ENCODE measurements at regions of chr19 and their contacts with region 1.

Region 1: DNA sequence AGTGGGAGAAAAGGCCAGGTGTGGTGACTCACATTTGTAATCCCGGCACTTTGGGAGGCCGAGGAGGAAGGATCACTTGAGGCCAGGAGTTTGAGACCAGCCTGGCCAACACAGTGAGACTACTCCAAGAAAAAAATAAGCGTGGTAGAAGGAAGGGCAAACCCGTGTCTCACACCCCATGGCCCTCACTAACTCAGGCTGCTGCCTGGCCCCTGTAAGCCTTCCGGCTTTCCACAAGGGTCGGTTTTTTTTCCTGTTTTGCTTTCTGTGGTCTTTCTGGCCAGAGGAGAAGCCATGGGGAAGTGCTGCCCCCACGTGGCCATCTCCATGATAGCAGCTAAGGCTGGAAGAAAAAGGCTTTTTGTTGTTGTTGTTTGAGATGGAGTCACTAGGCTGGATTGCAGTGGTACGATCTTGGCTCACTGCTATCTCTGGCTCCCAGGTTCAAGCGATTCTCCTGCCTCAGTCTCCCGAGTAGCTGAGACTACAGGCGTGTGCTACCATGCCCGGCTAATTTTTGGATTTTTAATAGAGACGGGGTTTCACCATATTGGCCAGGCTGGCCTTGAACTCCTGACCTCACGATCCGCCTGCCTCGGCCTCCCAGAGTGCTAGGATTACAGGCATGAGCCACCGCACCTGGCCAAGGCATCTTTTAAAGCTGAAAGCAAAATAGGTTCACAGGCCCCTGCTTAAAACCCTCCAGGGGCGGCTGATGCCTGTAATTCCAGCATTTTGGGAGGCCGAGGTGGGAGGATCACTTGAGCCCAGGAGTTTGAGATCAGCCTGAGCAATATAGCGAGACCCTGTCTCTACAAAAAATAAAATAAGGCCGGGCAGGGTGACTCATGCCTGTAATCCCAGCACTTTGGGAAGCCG is 7.5 kb upstream of the ARHGEF18 start:
- DNase-seq: peak; percentile 90
- H3K4me3 ChIP-seq: no peak overlapping the region
- H3K27ac ChIP-seq: peak overlapping the region in 2 of 4 donors; percentile 23 to 45
- H3K4me1 ChIP-seq: peaks cover 6 to 34% (median 14%) of the 10 kb centered on the region in 4 donors
- H3K27me3 ChIP-seq: no peaks in the 10 kb centered on the region
- CTCF ChIP-seq: peak; percentile 93 to 97 (median 96)
- EP300 ChIP-seq: no peak
- POLR2A ChIP-seq: no peak

Region 2: DNA sequence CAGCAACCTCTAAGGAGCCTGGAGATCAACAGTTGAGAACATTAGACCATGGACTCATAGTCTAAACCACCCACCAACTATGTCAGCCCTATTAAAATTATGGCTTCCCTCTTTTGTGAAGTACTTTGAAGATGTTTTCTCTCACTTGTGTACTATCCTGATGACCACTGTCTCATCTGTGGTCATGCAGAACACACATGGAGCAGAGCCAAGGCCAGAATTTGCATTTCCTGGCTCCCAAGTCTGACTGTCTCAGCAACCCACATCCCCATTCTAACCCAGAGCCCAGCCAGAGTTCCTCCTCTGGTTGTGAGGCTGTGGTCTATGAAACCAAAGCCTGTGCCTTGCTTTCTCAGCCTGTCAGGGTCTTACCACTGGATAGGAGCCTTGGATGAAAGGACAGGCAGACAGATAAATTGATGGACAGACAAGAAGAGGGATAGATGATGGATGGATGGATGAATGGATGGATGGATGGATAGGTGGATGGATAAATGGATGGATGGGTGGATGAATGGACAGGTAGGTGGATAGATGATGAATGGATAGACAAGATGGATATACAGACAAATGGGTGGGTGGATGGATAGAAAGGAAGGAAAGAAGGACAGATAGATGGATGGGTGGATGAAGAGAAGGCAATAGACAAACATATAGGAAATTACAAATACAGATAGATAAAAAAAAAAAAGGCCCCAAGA is 236.3 kb before region 1 on chr19:
- in situ Hi-C with region 1: loop called (anchors 5 to 25 kb)
- intact Hi-C with region 1: loop called (anchors 2 kb)
- DNase-seq: no peak
- H3K4me3 ChIP-seq: no peak overlapping the region
- H3K27ac ChIP-seq: no peak overlapping the region
- H3K4me1 ChIP-seq: peaks cover 0 to 14% (median under 1%) of the 10 kb centered on the region in 4 donors
- H3K27me3 ChIP-seq: peaks cover 5% of the 10 kb centered on the region
- CTCF ChIP-seq: no peak
- EP300 ChIP-seq: no peak
- POLR2A ChIP-seq: no peak

Region 3: DNA sequence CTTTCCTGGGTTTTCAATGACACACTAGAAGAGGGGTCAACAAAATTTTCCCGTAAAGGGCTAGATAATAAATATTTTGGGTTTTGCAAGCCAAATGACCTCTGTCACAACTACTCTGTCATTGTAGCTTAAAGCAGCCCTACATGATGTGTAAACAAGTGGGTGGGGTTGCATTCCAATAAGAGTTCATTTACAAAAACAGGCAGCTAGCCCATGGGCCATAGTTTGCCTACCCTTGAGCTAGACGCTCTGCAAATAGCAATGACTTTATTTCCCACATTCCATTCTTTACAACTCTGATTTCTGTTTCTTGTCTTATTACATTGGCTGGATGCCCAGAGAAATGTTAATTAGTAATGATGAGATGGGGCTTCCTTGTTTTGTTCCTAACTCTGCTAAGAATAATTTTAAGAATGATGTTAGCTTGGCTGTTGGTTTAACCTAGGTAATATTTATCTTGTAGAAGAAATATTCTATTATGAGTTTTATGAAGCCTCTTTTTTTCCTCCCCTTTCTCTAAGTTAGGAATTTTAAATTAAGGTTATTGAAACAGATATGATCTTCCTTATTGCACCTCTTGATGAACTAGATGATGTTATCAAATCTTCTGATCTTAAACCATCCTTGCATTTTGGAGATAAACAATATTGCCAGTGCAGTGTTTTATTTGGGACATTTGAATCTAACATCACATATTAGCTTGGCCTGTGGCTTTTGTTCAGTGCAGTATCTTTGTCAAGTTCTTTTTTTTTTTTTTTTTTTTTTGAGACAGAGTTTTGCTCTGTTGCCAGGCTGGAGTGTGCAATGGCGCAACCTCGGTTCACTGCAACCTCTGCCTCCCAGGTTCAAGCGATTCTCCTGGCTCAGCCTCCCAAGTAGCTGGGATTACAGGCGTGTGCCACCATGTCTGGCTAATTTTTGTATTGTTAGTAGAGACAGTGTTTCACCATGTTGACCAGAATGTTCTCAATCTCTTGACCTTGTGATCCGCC is 195.4 kb before region 1 on chr19:
- in situ Hi-C with region 1: no loop called
- intact Hi-C with region 1: loop called (anchors 5 kb)
- DNase-seq: peak; percentile 41
- H3K4me3 ChIP-seq: no peak overlapping the region
- H3K27ac ChIP-seq: peak overlapping the region in 3 of 4 donors; percentile 26 to 49 (median 36)
- H3K4me1 ChIP-seq: peaks cover 0 to 6% (median 0%) of the 10 kb centered on the region in 4 donors
- H3K27me3 ChIP-seq: no peaks in the 10 kb centered on the region
- CTCF ChIP-seq: no peak
- EP300 ChIP-seq: no peak
- POLR2A ChIP-seq: no peak

Region 4: DNA sequence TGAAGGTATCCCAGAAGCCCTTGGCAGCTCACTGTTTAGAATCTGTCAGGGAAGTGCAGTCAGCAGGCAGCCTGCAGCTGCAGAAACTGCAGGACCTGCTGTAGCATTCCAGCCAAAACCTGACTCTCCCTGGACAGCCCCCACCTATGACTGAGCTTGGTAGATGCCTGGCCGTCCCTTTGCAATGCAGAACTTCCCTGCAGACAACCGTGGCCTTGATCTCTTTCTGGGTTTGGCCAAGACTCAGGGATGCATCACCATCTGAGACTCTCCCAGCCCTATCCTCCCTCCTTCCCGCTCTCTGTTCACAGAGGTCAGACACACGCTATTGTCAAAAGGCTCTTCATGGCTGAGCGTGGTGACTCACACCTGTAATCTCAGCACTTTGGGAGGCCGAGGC is 172.3 kb before region 1 on chr19:
- in situ Hi-C with region 1: no loop called
- intact Hi-C with region 1: no loop called
- DNase-seq: no peak
- H3K4me3 ChIP-seq: no peak overlapping the region
- H3K27ac ChIP-seq: no peak overlapping the region
- H3K4me1 ChIP-seq: no peaks in the 10 kb centered on the region
- H3K27me3 ChIP-seq: no peaks in the 10 kb centered on the region
- CTCF ChIP-seq: no peak
- EP300 ChIP-seq: no peak
- POLR2A ChIP-seq: no peak

Region 5: GRCh38 chr19:7280940-7281666 is 60.1 kb before region 1 on chr19:
- in situ Hi-C with region 1: no loop called
- intact Hi-C with region 1: no loop called
- DNase-seq: no peak
- H3K4me3 ChIP-seq: no peak overlapping the region
- H3K27ac ChIP-seq: no peak overlapping the region
- H3K4me1 ChIP-seq: no peaks in the 10 kb centered on the region
- H3K27me3 ChIP-seq: no peaks in the 10 kb centered on the region
- CTCF ChIP-seq: no peak
- EP300 ChIP-seq: no peak
- POLR2A ChIP-seq: no peak

Measured in transverse colon (tissue), 4 donors.